ENCODE measurements at regions of chr12 and their contacts with region 1.

Region 1: GRCh38 chr12:2583091-2583497 is 211.7 kb upstream of the FKBP4 start:
- DNase-seq: peak; percentile 68
- ATAC-seq: peak; percentile 86
- H3K4me3 Mint-ChIP-seq: no peak overlapping the region
- H3K27ac Mint-ChIP-seq: no peak overlapping the region
- H3K4me1 Mint-ChIP-seq: peaks cover 2% of the 10 kb centered on the region
- H3K27me3 Mint-ChIP-seq: peaks cover 30% of the 10 kb centered on the region
- CTCF ChIP-seq: peak; percentile 95

Region 2: GRCh38 chr12:2561367-2561766 is 21.7 kb before region 1 on chr12:
- CTCF ChIA-PET with region 1: interaction called, 10 read pairs
- POLR2A ChIA-PET with region 1: no interaction called
- intact Hi-C with region 1: no loop called
- DNase-seq: no peak
- ATAC-seq: no peak
- H3K4me3 Mint-ChIP-seq: no peak overlapping the region
- H3K27ac Mint-ChIP-seq: no peak overlapping the region
- H3K4me1 Mint-ChIP-seq: no peaks in the 10 kb centered on the region
- H3K27me3 Mint-ChIP-seq: no peaks in the 10 kb centered on the region
- CTCF ChIP-seq: no peak

Region 3: GRCh38 chr12:2666411-2666810 is 83.3 kb after region 1 on chr12:
- CTCF ChIA-PET with region 1: no interaction called
- POLR2A ChIA-PET with region 1: no interaction called
- intact Hi-C with region 1: no loop called
- DNase-seq: no peak
- ATAC-seq: peak; percentile 45
- H3K4me3 Mint-ChIP-seq: no peak overlapping the region
- H3K27ac Mint-ChIP-seq: no peak overlapping the region
- H3K4me1 Mint-ChIP-seq: no peaks in the 10 kb centered on the region
- H3K27me3 Mint-ChIP-seq: no peaks in the 10 kb centered on the region
- CTCF ChIP-seq: no peak

Measured in activated CD8-positive, alpha-beta T cell treated with anti-CD3 and anti-CD28 coated beads for 36 hours (primary cell).